PC-9 (cell line): ENCODE measurements at regions of chr13 and their contacts with region 1.

Region 1: GRCh38 chr13:113951246-113951999 is 22.5 kb downstream of the C13orf46 start:
- DNase-seq: peak; percentile 60 to 86
- H3K4me3 ChIP-seq: no peak overlapping the region
- H3K27ac ChIP-seq: no peak overlapping the region
- H3K4me1 ChIP-seq: no peaks in the 10 kb centered on the region
- H3K27me3 ChIP-seq: no peaks in the 10 kb centered on the region
- CTCF ChIP-seq: peak; percentile 89

Region 2: GRCh38 chr13:113863436-113864272 is 87.8 kb before region 1 on chr13 and contains the start of gene GAS6:
- CTCF ChIA-PET with region 1: no interaction called
- POLR2A ChIA-PET with region 1: no interaction called
- intact Hi-C with region 1: loop called (anchors 2 kb)
- DNase-seq: peak in 1 of 2 experiments; percentile 60
- H3K4me3 ChIP-seq: peak within 1 kb of the TSS; percentile 57
- H3K27ac ChIP-seq: no peak within 1 kb of the TSS
- H3K4me1 ChIP-seq: peaks cover 13% of the 10 kb centered on the region; the same call in 1 of the 2 replicates
- H3K27me3 ChIP-seq: peaks cover 10% of the 10 kb centered on the region; the same call in 1 of the 2 replicates
- CTCF ChIP-seq: no peak; the same call in 1 of the 2 replicates
- total RNA-seq, gene GAS6: 92.9 and 93.8 TPM in 2 replicates

Region 3: GRCh38 chr13:113897161-113897560 is 54.3 kb before region 1 on chr13:
- CTCF ChIA-PET with region 1: no interaction called
- POLR2A ChIA-PET with region 1: no interaction called
- intact Hi-C with region 1: loop called (anchors 5 kb)
- DNase-seq: peak; percentile 88 to 94
- H3K4me3 ChIP-seq: no peak overlapping the region
- H3K27ac ChIP-seq: peak overlapping the region; percentile 71
- H3K4me1 ChIP-seq: peaks cover 29% of the 10 kb centered on the region
- H3K27me3 ChIP-seq: no peaks in the 10 kb centered on the region
- CTCF ChIP-seq: no peak

Region 4: GRCh38 chr13:114019367-114019766 is 67.9 kb after region 1 on chr13:
- CTCF ChIA-PET with region 1: no interaction called
- POLR2A ChIA-PET with region 1: interaction called, 18 read pairs
- intact Hi-C with region 1: loop called (anchors 1 kb)
- DNase-seq: no peak
- H3K4me3 ChIP-seq: no peak overlapping the region
- H3K27ac ChIP-seq: no peak overlapping the region
- H3K4me1 ChIP-seq: 0 out of 2 replicates have a peak, but pooled peaks cover 13% of the 10 kb centered on the region
- H3K27me3 ChIP-seq: no peaks in the 10 kb centered on the region
- CTCF ChIP-seq: no peak

Region 5: GRCh38 chr13:114226699-114227323 is 275.4 kb after region 1 on chr13:
- CTCF ChIA-PET with region 1: no interaction called
- POLR2A ChIA-PET with region 1: no interaction called
- intact Hi-C with region 1: loop called (anchors 1 kb)
- DNase-seq: peak; percentile 76 to 87
- H3K4me3 ChIP-seq: no peak overlapping the region
- H3K27ac ChIP-seq: no peak overlapping the region
- H3K4me1 ChIP-seq: 0 out of 2 replicates have a peak, but pooled peaks cover 11% of the 10 kb centered on the region
- H3K27me3 ChIP-seq: peaks cover 9% of the 10 kb centered on the region; the same call in 1 of the 2 replicates
- CTCF ChIP-seq: peak; percentile 95

Region 6: GRCh38 chr13:114234645-114235421 is 283.4 kb after region 1 on chr13 and contains the start of gene CDC16:
- CTCF ChIA-PET with region 1: no interaction called
- POLR2A ChIA-PET with region 1: no interaction called
- intact Hi-C with region 1: loop called (anchors 2 kb)
- DNase-seq: peak; percentile 84 to 87
- H3K4me3 ChIP-seq: peak within 1 kb of the TSS; percentile 89
- H3K27ac ChIP-seq: peak within 1 kb of the TSS; percentile 61
- H3K4me1 ChIP-seq: peaks cover 18% of the 10 kb centered on the region
- H3K27me3 ChIP-seq: 0 out of 2 replicates have a peak, but pooled peaks cover 3% of the 10 kb centered on the region
- CTCF ChIP-seq: no peak
- total RNA-seq, gene CDC16: 45.7 and 56.8 TPM in 2 replicates